Activated CD4-positive, alpha-beta memory T cell treated with anti-CD3 and anti-CD28 coated beads for 36 hours (primary cell): ENCODE measurements at regions of chr13 and their contacts with region 1.

Region 1: DNA sequence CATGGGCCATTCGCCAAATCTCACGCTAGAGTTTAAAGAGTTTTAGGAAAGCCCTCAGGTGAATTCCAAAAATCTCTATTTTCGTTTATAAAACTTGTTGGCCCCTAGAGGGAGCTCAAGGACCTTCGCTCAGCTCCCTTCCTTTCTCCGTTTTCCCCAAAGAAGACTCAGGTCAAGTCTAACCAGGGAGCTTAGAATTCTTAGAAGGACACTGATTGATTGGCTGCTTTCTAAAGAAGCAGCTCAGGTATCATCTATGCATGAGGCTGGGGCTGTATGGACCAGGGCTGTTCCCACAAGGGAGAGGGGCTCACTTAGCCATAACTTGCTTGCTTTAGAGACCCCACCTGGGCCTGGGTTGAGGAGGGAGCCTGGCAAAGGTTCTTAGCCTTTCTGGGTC is 20.5 kb downstream of the DZIP1 start:
- DNase-seq: peak; percentile 12
- H3K4me3 Mint-ChIP-seq: no peak overlapping the region
- H3K27ac Mint-ChIP-seq: no peak overlapping the region
- H3K4me1 Mint-ChIP-seq: no peaks in the 10 kb centered on the region
- H3K27me3 Mint-ChIP-seq: peaks cover 6% of the 10 kb centered on the region

Region 2: GRCh38 chr13:95547531-95548167 is 76.4 kb before region 1 on chr13:
- CTCF ChIA-PET with region 1: no interaction called
- POLR2A ChIA-PET with region 1: no interaction called
- intact Hi-C with region 1: no loop called
- DNase-seq: no peak
- H3K4me3 Mint-ChIP-seq: no peak overlapping the region
- H3K27ac Mint-ChIP-seq: no peak overlapping the region
- H3K4me1 Mint-ChIP-seq: no peaks in the 10 kb centered on the region
- H3K27me3 Mint-ChIP-seq: peaks cover 41% of the 10 kb centered on the region

Region 3: DNA sequence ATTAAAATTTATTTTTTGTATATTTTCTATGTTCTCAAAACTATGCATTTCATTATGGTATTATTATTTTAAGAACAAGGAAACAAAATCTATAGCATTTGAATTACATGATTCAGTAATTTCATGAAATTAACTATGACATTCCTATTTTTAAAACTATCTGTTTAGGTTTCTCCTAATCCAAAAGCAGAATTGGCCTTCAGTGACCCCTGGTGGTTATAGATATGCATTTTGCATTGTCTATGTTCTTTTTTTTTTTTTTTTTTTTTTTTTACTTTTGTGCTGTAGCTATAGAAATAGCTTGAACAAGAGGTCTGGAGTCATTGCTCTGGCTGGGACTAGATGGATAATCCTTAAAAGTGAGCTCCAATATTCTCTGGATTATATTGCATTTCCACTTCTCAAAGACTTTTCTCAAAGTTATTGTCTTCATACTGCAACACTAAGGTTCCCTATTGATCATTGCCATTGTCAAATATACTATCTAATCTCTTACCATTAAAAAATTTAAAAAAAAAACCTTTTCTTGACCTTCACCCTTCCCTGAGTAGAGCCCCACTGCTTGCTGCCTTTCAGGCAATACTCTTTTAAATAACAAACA is 37.1 kb after region 1 on chr13:
- CTCF ChIA-PET with region 1: interaction called, 22 read pairs
- POLR2A ChIA-PET with region 1: no interaction called
- intact Hi-C with region 1: loop called (anchors 1 kb)
- DNase-seq: no peak
- H3K4me3 Mint-ChIP-seq: no peak overlapping the region
- H3K27ac Mint-ChIP-seq: no peak overlapping the region
- H3K4me1 Mint-ChIP-seq: no peaks in the 10 kb centered on the region
- H3K27me3 Mint-ChIP-seq: peaks cover 16% of the 10 kb centered on the region

Region 4: DNA sequence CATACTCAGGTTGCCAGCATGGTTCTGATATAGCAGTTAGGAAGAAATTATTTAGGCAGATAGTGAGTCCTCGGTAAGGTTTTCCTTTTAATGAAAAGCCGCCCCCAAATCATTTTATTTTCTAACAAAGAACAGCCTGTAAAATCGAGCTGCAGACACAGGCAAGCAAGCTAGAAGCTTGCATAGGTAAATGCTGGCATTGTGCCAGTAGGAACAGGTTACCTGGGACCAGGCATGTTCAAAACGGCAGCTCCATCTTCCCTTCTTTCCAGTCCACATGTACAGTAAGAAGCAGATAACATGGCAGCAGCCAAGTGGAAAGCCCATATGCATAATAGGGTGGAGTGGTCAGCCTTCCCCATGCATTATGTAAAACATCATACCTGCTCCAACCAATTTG is 358.1 kb after region 1 on chr13:
- CTCF ChIA-PET with region 1: interaction called, 5 read pairs
- POLR2A ChIA-PET with region 1: no interaction called
- intact Hi-C with region 1: loop called (anchors 2 kb)
- DNase-seq: no peak
- H3K4me3 Mint-ChIP-seq: no peak overlapping the region
- H3K27ac Mint-ChIP-seq: no peak overlapping the region
- H3K4me1 Mint-ChIP-seq: no peaks in the 10 kb centered on the region
- H3K27me3 Mint-ChIP-seq: no peaks in the 10 kb centered on the region